ENCODE measurements at regions of chr5 and their contacts with region 1.

Region 1: DNA sequence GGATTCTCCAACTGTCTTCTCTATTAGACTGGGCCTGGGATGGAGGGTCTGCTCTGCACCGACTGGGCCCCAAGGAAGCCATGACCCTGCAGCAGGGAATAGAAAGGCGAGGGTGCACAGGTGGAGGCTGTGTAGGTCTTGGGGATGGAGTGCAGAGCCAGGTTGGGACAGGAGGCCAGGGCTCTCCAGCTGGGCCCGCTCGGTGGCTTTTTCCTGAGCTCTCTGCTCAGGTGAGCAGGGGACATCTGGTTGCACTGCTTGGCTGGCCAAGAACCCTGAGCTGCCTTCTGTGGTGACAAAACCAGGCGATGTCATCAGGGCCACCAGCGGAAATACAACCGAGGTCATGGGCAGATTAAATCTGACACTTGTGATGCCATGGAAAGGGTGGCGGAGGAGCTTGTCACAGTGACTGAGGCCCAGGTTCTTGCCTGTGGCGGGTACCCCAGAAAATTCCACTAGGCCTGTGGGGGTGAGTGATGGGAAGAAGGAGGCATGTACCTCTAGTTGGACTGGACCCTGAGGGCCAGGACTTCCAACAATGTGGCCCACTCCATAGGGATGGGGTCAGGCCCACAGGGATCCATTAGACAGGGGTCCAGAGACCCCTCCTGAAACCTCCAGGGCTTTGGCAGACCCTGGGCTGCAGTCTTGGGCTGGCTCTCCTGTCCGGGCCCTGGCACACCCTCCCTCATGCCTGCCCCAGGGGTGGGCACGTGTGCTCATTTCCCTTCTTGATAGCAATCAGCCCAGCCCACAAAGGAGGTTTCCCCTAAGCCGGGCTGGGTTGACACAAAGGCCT is 4.4 kb upstream of the IL3 start:
- DNase-seq: peak; percentile 49 to 78
- ATAC-seq: peak; percentile 80 to 90 (median 87)
- H3K4me3 ChIP-seq: no peak overlapping the region
- H3K4me3 Mint-ChIP-seq: peak overlapping the region; percentile 50
- H3K27ac ChIP-seq: peak overlapping the region; percentile 93
- H3K27ac Mint-ChIP-seq: peak overlapping the region; percentile 78 to 81
- H3K4me1 ChIP-seq: peaks cover 65% of the 10 kb centered on the region
- H3K4me1 Mint-ChIP-seq: peaks cover 22 to 59% of the 10 kb centered on the region in 2 donors
- H3K27me3 ChIP-seq: no peaks in the 10 kb centered on the region
- H3K27me3 Mint-ChIP-seq: peaks cover 5 to 14% of the 10 kb centered on the region in 2 donors
- CTCF ChIP-seq: no peak

Region 2: GRCh38 chr5:132027027-132027426 is 29.0 kb before region 1 on chr5:
- intact Hi-C with region 1: loop called (anchors 2 kb)
- DNase-seq: peak in 1 of 2 donors; percentile 23
- ATAC-seq: peak; percentile 30 to 44 (median 43)
- H3K4me3 ChIP-seq: no peak overlapping the region
- H3K4me3 Mint-ChIP-seq: peak overlapping the region; percentile 32
- H3K27ac ChIP-seq: peak overlapping the region; percentile 74
- H3K27ac Mint-ChIP-seq: no peak overlapping the region
- H3K4me1 ChIP-seq: peaks cover 34% of the 10 kb centered on the region
- H3K4me1 Mint-ChIP-seq: peaks cover 5 to 24% of the 10 kb centered on the region in 2 donors
- H3K27me3 ChIP-seq: no peaks in the 10 kb centered on the region
- H3K27me3 Mint-ChIP-seq: peaks cover 9 to 17% of the 10 kb centered on the region in 2 donors
- CTCF ChIP-seq: no peak

Measured in natural killer cell (primary cell).